Naive thymus-derived CD4-positive, alpha-beta T cell (primary cell): ENCODE measurements at regions of chr14 and their contacts with region 1.

Region 1: DNA sequence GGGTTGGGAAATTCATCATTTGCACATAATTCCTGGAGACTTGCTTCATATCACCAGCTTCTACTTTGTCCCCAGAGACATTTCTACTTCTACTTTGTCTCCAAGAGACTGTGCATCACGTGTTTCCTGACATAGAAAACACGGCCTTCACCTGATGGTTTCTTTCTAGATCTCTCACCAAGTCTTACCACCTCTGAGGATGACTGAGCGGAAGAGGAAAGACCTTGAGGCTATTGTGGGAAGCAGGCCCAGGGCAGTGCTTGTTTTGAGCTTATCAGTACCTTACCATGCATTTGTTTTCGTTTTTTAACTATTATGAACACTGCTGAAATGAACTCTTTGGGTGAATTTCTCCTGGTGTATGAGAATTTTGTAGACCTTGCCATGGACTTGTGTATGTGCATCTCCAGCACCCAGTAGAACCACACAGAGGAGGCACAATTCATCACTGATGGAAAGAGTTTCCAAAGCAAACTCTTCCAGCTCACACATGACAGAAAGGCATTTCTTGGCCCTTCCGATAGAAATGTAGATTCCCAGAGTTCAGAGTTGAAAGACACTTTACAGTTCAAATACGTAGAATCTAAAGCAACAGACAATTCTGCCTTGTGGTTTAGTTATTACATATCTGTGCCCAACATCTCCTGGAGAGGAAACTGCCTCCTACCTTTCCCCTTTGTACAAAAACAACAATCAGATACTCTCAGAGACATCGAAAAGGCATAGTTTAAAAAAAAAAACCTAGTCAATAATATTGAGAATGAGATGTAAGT is 434.7 kb downstream of the FUT8 start:
- DNase-seq: peak in 8 of 9 donors; percentile 67 to 94 (median 90)
- ATAC-seq: peak; percentile 90
- H3K4me3 ChIP-seq: peak overlapping the region; percentile 38
- H3K4me3 Mint-ChIP-seq: peak overlapping the region; percentile 70 to 88 (median 80)
- H3K27ac ChIP-seq: peak overlapping the region; percentile 74
- H3K27ac Mint-ChIP-seq: peak overlapping the region; percentile 91 to 99 (median 94)
- H3K4me1 ChIP-seq: peaks cover 63 to 85% of the 10 kb centered on the region in 2 donors
- H3K4me1 Mint-ChIP-seq: peaks cover 39 to 92% (median 88%) of the 10 kb centered on the region in 7 donors
- H3K27me3 ChIP-seq: no peaks in the 10 kb centered on the region
- H3K27me3 Mint-ChIP-seq: no peaks in the 10 kb centered on the region

Region 2: GRCh38 chr14:64053694-64054528 is 1793.3 kb before region 1 on chr14:
- CTCF ChIA-PET with region 1: no interaction called
- POLR2A ChIA-PET with region 1: no interaction called
- intact Hi-C with region 1: no loop called
- DNase-seq: no peak
- ATAC-seq: no peak
- H3K4me3 ChIP-seq: no peak overlapping the region
- H3K4me3 Mint-ChIP-seq: no peak overlapping the region
- H3K27ac ChIP-seq: no peak overlapping the region
- H3K27ac Mint-ChIP-seq: no peak overlapping the region
- H3K4me1 ChIP-seq: no peaks in the 10 kb centered on the region
- H3K4me1 Mint-ChIP-seq: no peaks in the 10 kb centered on the region
- H3K27me3 ChIP-seq: no peaks in the 10 kb centered on the region
- H3K27me3 Mint-ChIP-seq: no peaks in the 10 kb centered on the region

Region 3: GRCh38 chr14:64914237-64914971 is 932.9 kb before region 1 on chr14 and contains the start of gene CHURC1:
- CTCF ChIA-PET with region 1: no interaction called
- POLR2A ChIA-PET with region 1: no interaction called
- intact Hi-C with region 1: loop called in 1 of 2 experiments (anchors 5 kb)
- DNase-seq: peak; percentile 83 to 99 (median 94)
- ATAC-seq: peak; percentile 98
- H3K4me3 ChIP-seq: peak within 1 kb of the TSS; percentile 96
- H3K4me3 Mint-ChIP-seq: peak within 1 kb of the TSS; percentile 87 to 97 (median 92)
- H3K27ac ChIP-seq: peak within 1 kb of the TSS; percentile 99
- H3K27ac Mint-ChIP-seq: peak within 1 kb of the TSS; percentile 93 to 99 (median 97)
- H3K4me1 ChIP-seq: peaks cover 33 to 37% of the 10 kb centered on the region in 2 donors
- H3K4me1 Mint-ChIP-seq: peaks cover 42 to 60% (median 51%) of the 10 kb centered on the region in 7 donors
- H3K27me3 ChIP-seq: no peaks in the 10 kb centered on the region
- H3K27me3 Mint-ChIP-seq: peaks cover 0 to 13% (median 0%) of the 10 kb centered on the region in 5 donors
- total RNA-seq, gene CHURC1: 71.9 to 117 (median 80.7) TPM

Region 4: GRCh38 chr14:65287264-65288131 is 559.8 kb before region 1 on chr14:
- CTCF ChIA-PET with region 1: no interaction called
- POLR2A ChIA-PET with region 1: interaction called, 3 read pairs
- intact Hi-C with region 1: loop called (anchors 2 to 5 kb)
- DNase-seq: peak in 8 of 9 donors; percentile 51 to 80 (median 75)
- ATAC-seq: peak; percentile 84
- H3K4me3 ChIP-seq: peak overlapping the region; percentile 27
- H3K4me3 Mint-ChIP-seq: peak overlapping the region; percentile 75 to 91 (median 85)
- H3K27ac ChIP-seq: peak overlapping the region; percentile 69
- H3K27ac Mint-ChIP-seq: peak overlapping the region; percentile 90 to 100 (median 98)
- H3K4me1 ChIP-seq: peaks cover 49 to 59% of the 10 kb centered on the region in 2 donors
- H3K4me1 Mint-ChIP-seq: peaks cover 51 to 90% (median 77%) of the 10 kb centered on the region in 7 donors
- H3K27me3 ChIP-seq: no peaks in the 10 kb centered on the region
- H3K27me3 Mint-ChIP-seq: no peaks in the 10 kb centered on the region

Region 5: GRCh38 chr14:65860956-65861611 is 13.8 kb after region 1 on chr14:
- CTCF ChIA-PET with region 1: interaction called, 11 read pairs
- POLR2A ChIA-PET with region 1: interaction called, 29 read pairs
- intact Hi-C with region 1: loop called (anchors 1 to 2 kb)
- DNase-seq: peak in 7 of 9 donors; percentile 22 to 64 (median 49)
- ATAC-seq: peak; percentile 62
- H3K4me3 ChIP-seq: no peak overlapping the region
- H3K4me3 Mint-ChIP-seq: peak overlapping the region; percentile 12 to 78 (median 61)
- H3K27ac ChIP-seq: no peak overlapping the region
- H3K27ac Mint-ChIP-seq: peak overlapping the region; percentile 69 to 85 (median 78)
- H3K4me1 ChIP-seq: peaks cover 18 to 53% of the 10 kb centered on the region in 2 donors
- H3K4me1 Mint-ChIP-seq: peaks cover 41 to 73% (median 66%) of the 10 kb centered on the region in 7 donors
- H3K27me3 ChIP-seq: no peaks in the 10 kb centered on the region
- H3K27me3 Mint-ChIP-seq: peaks cover 0 to 1% (median 0%) of the 10 kb centered on the region in 5 donors

Region 6: GRCh38 chr14:65927931-65928356 is 80.7 kb after region 1 on chr14:
- CTCF ChIA-PET with region 1: interaction called, 9 read pairs
- POLR2A ChIA-PET with region 1: interaction called, 24 read pairs
- intact Hi-C with region 1: loop called (anchors 1 kb)
- DNase-seq: peak; percentile 31 to 77 (median 70)
- ATAC-seq: peak; percentile 92
- H3K4me3 ChIP-seq: peak overlapping the region; percentile 5
- H3K4me3 Mint-ChIP-seq: peak overlapping the region; percentile 68 to 80 (median 73)
- H3K27ac ChIP-seq: peak overlapping the region; percentile 52
- H3K27ac Mint-ChIP-seq: peak overlapping the region; percentile 84 to 98 (median 92)
- H3K4me1 ChIP-seq: peaks cover 47 to 51% of the 10 kb centered on the region in 2 donors
- H3K4me1 Mint-ChIP-seq: peaks cover 45 to 72% (median 61%) of the 10 kb centered on the region in 7 donors
- H3K27me3 ChIP-seq: no peaks in the 10 kb centered on the region
- H3K27me3 Mint-ChIP-seq: no peaks in the 10 kb centered on the region

Region 7: GRCh38 chr14:67240978-67241414 is 1393.7 kb after region 1 on chr14:
- CTCF ChIA-PET with region 1: no interaction called
- POLR2A ChIA-PET with region 1: no interaction called
- intact Hi-C with region 1: loop called in 1 of 2 experiments (anchors 2 kb)
- DNase-seq: peak; percentile 87 to 93 (median 91)
- ATAC-seq: peak; percentile 97
- H3K4me3 ChIP-seq: peak overlapping the region; percentile 84
- H3K4me3 Mint-ChIP-seq: peak overlapping the region; percentile 81 to 95 (median 91)
- H3K27ac ChIP-seq: peak overlapping the region; percentile 74
- H3K27ac Mint-ChIP-seq: peak overlapping the region; percentile 8 to 92 (median 85)
- H3K4me1 ChIP-seq: peaks cover 6 to 10% of the 10 kb centered on the region in 2 donors
- H3K4me1 Mint-ChIP-seq: peaks cover 16 to 37% (median 28%) of the 10 kb centered on the region in 7 donors
- H3K27me3 ChIP-seq: no peaks in the 10 kb centered on the region
- H3K27me3 Mint-ChIP-seq: peaks cover 0 to 33% (median 0%) of the 10 kb centered on the region in 5 donors